ENCODE measurements at regions of chr12 and their contacts with region 1.

Region 1: DNA sequence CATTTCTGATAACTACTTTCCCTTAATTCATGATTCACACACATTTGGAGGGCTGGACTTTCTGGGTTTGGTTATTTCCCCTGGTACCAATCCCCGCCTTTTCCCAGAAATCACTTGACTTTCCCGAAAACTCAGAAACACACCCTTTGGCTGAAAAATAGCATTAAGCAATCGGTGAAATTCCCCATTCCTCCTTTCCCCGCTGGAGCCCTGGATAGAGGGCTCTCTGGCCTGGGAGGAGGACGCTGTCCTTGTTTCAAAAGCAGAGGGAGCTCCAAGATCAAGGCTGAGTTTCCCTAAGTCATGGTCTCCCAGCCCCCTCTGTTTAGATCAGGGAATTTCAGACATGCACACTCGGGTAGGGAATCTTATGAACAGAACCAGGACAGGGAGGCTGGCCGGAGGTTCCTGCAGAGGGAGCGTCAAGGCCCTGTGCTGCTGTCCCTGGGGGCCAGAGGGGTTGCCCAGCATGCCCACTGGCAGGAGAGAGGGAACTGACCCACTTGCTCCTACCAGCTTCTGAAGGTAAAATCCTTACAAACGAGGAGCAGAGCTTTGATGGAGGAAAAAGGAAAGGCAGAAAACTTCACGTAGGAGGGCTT is at the start of gene C1S:
- DNase-seq: no peak
- ATAC-seq: peak; percentile 98
- total RNA-seq, gene C1S: 153 TPM

Region 2: DNA sequence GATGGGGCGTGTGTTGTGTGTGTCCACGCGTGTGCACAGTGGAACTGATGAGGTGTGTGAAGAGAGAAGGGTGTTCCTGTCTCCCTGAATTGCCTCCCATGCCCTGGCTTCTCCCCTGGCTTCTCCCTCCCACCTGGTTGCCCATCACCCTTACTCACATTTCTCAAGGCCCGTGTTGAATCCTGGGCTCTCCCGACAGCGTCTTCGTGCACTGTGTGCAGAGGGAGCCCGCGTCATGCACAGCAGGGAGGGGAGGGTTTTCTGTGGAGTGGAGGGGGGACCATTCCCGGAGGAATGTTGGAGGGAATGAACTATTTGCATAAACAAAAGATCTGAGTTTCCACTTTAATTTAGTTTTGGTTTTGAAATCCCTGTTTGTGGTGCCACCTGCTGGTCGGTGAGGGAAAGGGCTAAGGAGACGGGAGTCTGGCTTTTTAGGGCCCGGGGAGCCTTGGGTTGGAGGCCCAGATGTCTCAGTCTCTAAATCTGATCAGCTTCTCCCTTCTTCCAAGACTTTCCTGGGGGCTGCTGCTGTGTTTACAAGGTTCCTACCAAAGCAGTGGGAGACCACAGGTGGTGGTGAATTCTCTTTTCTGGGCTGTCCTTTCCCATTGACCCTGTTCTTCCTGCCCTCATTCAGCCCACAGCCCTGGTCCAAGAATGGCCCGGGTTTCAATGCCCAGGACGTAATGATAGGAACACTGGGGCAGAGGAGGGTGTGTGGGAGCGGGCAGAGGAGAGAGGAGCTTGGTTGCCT is 32.0 kb after region 1 on chr12 and contains the start of gene C1R:
- intact Hi-C with region 1: loop called (anchors 1 kb)
- DNase-seq: peak; percentile 86
- ATAC-seq: peak; percentile 85
- total RNA-seq, gene C1R: 227 TPM

Region 3: DNA sequence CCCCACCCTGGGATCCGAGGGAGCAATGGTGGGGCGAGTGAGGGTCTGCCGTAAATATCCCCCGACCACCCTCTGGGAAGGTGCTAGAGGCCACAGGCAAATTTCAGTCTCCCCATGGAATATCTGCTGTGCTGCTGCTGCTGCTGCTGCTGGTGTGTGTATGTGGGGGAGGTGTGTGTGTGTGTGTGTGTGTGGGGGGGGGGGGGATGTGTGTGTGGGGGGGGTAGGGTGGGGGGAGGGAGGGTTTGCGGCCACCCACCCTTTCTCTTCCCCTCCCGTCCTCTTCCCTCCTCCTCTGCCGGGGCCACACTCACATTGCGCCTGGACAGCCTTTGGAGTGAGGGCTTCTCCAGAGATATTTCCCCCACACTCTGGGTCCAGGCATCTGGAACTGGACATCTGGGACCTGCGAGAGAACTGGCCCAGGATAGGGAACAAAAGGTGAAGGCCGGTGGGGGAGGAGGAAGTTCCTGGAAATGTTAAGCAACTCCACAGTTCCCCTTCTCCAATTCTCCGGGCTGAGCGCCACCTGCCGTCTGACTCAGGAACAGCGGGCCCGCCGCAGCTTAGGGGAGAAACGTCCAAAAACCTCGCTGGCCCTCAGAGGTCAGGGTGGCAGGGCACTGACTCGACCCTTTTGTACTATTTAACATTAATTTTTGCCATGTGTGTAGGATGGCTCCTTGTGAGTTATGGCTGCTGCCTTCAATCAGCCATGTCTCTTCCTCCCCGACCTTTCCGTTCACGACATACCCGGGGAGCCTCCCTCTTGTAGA is 48.5 kb after region 1 on chr12 and contains the start of gene C1RL:
- intact Hi-C with region 1: loop called (anchors 2 kb)
- DNase-seq: peak; percentile 96
- ATAC-seq: peak; percentile 89
- total RNA-seq, gene C1RL: 14.4 TPM

Region 4: GRCh38 chr12:7591531-7591930 is 531.1 kb after region 1 on chr12:
- intact Hi-C with region 1: no loop called
- DNase-seq: no peak
- ATAC-seq: no peak

Measured in Right ventricle myocardium inferior (tissue), 1 donor.